ENCODE measurements at regions of chr7 and their contacts with region 1.

Region 1: GRCh38 chr7:21427182-21427870 is 557 bp upstream of the SP4 start:
- DNase-seq: peak; percentile 100
- H3K4me3 Mint-ChIP-seq: peak overlapping the region; percentile 100
- H3K27ac Mint-ChIP-seq: peak overlapping the region; percentile 100
- H3K4me1 Mint-ChIP-seq: peaks cover 67% of the 10 kb centered on the region
- H3K27me3 Mint-ChIP-seq: no peaks in the 10 kb centered on the region

Region 2: GRCh38 chr7:21338728-21339164 is 88.6 kb before region 1 on chr7:
- intact Hi-C with region 1: loop called (anchors 1 kb)
- DNase-seq: peak; percentile 57
- H3K4me3 Mint-ChIP-seq: peak overlapping the region; percentile 25
- H3K27ac Mint-ChIP-seq: peak overlapping the region; percentile 92
- H3K4me1 Mint-ChIP-seq: peaks cover 84% of the 10 kb centered on the region
- H3K27me3 Mint-ChIP-seq: no peaks in the 10 kb centered on the region

Region 3: GRCh38 chr7:21383227-21384220 is 43.8 kb before region 1 on chr7:
- intact Hi-C with region 1: loop called (anchors 1 kb)
- DNase-seq: no peak
- H3K4me3 Mint-ChIP-seq: peak overlapping the region; percentile 60
- H3K27ac Mint-ChIP-seq: peak overlapping the region; percentile 46
- H3K4me1 Mint-ChIP-seq: peaks cover 43% of the 10 kb centered on the region
- H3K27me3 Mint-ChIP-seq: no peaks in the 10 kb centered on the region

Region 4: GRCh38 chr7:21507626-21508343 is 80.5 kb after region 1 on chr7:
- intact Hi-C with region 1: loop called (anchors 1 kb)
- DNase-seq: no peak
- H3K4me3 Mint-ChIP-seq: no peak overlapping the region
- H3K27ac Mint-ChIP-seq: no peak overlapping the region
- H3K4me1 Mint-ChIP-seq: peaks cover 9% of the 10 kb centered on the region
- H3K27me3 Mint-ChIP-seq: no peaks in the 10 kb centered on the region

Region 5: DNA sequence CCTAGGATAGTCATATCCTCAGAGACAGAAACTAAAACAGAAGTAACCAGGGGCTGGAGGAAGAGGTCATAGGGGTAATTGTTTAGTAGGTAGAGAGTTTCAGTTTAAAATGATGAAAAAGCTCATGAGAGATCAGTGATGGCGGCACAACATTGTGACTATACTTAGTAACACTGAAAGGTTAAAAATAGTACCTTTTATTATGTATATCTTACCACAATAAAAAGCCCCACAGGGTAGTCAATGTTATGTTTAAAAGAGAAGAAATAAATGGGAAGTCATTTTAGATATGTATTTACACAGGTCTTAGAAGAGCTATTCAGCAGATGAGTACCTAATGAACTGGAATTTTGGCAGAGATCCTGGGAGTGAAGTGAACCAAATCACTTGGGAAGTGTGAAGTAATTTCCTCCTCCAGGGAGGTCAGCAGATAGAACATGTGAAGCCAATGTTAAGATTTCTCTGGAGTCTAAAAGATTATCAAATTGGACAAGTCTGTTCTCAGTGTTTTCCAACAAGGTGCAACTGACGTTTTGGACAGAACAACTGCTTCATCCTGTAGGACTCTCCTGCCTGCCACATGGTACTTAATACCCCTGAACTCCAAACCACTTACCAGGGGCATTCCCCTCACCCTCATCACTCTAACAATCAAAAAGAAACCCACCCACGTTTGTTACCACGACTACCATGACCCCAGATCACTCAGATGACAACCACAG is 512.0 kb after region 1 on chr7:
- intact Hi-C with region 1: loop called (anchors 1 kb)
- DNase-seq: peak; percentile 34
- H3K4me3 Mint-ChIP-seq: peak overlapping the region; percentile 32
- H3K27ac Mint-ChIP-seq: peak overlapping the region; percentile 92
- H3K4me1 Mint-ChIP-seq: peaks cover 67% of the 10 kb centered on the region
- H3K27me3 Mint-ChIP-seq: no peaks in the 10 kb centered on the region

Region 6: GRCh38 chr7:23013715-23014649 is 1586.7 kb after region 1 on chr7 and contains the start of gene HYCC1:
- intact Hi-C with region 1: loop called (anchors 2 kb)
- DNase-seq: peak; percentile 99
- H3K4me3 Mint-ChIP-seq: peak within 1 kb of the TSS; percentile 93
- H3K27ac Mint-ChIP-seq: peak within 1 kb of the TSS; percentile 94
- H3K4me1 Mint-ChIP-seq: peaks cover 34% of the 10 kb centered on the region
- H3K27me3 Mint-ChIP-seq: no peaks in the 10 kb centered on the region
- total RNA-seq, gene HYCC1: 36.8 and 45.7 TPM in 2 replicates

Region 7: GRCh38 chr7:23315366-23315765 is 1888.0 kb after region 1 on chr7:
- intact Hi-C with region 1: no loop called
- DNase-seq: no peak
- H3K4me3 Mint-ChIP-seq: no peak overlapping the region
- H3K27ac Mint-ChIP-seq: no peak overlapping the region
- H3K4me1 Mint-ChIP-seq: no peaks in the 10 kb centered on the region
- H3K27me3 Mint-ChIP-seq: peaks cover 5% of the 10 kb centered on the region